Testis (tissue), 5 donors: ENCODE measurements at regions of chr15 and their contacts with region 1.

Region 1: DNA sequence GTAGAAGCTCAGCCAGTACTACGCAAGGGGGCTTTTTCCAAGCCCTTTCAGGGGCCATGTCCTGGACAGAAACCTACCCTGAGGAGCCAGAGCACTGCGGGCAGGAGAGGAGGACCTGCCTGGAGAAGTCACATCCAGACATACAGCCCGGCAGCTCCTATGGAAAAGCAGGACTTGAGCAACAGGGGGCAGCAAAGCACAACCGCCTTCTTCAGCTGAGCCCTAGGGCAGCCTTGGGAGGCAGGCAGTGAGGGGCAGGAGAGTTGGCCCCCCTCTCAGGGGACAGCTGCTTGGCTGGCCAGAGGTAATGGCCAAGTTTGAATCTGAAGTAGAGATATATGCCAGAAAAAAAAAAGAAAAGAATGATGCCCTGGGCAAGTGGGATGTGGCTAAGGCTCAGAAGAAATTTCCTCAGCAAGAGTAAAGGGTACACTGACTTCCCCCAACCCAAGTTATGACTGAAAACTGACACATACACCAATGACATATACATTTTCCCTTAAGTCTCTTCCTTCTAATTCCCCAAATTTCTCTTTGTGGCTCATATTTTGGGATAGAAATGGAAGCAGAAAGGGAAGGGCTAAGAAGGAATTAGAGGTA is 56.9 kb downstream of the CYP19A1 start:
- DNase-seq: peak; percentile 80
- H3K4me3 ChIP-seq: no peak overlapping the region
- H3K27ac ChIP-seq: no peak overlapping the region
- H3K4me1 ChIP-seq: peaks cover 7% of the 10 kb centered on the region
- H3K27me3 ChIP-seq: no peaks in the 10 kb centered on the region
- CTCF ChIP-seq: peak in 2 of 3 experiments; percentile 52 to 56
- POLR2A ChIP-seq: no peak

Region 2: GRCh38 chr15:51377071-51377786 is 95.8 kb after region 1 on chr15:
- intact Hi-C with region 1: loop called (anchors 10 kb)
- DNase-seq: no peak
- H3K4me3 ChIP-seq: no peak overlapping the region
- H3K27ac ChIP-seq: no peak overlapping the region
- H3K4me1 ChIP-seq: peaks cover 4% of the 10 kb centered on the region
- H3K27me3 ChIP-seq: no peaks in the 10 kb centered on the region
- CTCF ChIP-seq: no peak
- POLR2A ChIP-seq: no peak

Region 3: DNA sequence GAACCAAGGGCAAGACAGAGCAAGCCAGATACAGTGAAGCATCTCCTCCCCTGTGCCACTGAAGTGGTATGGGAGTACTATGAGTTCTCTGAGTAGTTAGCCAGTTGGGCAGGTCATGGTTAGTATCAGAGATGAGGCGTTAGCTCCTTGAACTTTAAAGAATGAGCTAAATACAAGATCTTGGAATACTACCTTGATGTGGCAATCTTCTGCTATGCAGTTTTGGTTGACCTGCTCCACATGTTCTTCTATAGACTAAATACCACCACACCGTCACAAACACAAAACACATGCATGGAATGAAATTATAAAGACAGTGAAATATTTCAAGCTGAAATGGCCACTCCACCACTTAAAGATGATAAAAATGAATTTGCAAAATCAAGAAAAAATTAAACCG is 177.9 kb after region 1 on chr15:
- intact Hi-C with region 1: no loop called
- DNase-seq: no peak
- H3K4me3 ChIP-seq: no peak overlapping the region
- H3K27ac ChIP-seq: no peak overlapping the region
- H3K4me1 ChIP-seq: no peaks in the 10 kb centered on the region
- H3K27me3 ChIP-seq: no peaks in the 10 kb centered on the region
- CTCF ChIP-seq: no peak
- POLR2A ChIP-seq: no peak